ENCODE measurements at regions of chr2 and their contacts with region 1.

Region 1: GRCh38 chr2:198873503-198874471 is 584.0 kb downstream of the SATB2 start:
- DNase-seq: no peak
- ATAC-seq: peak; percentile 53
- H3K4me3 ChIP-seq: no peak overlapping the region
- H3K27ac ChIP-seq: no peak overlapping the region
- H3K4me1 ChIP-seq: no peaks in the 10 kb centered on the region
- H3K27me3 ChIP-seq: no peaks in the 10 kb centered on the region
- CTCF ChIP-seq: no peak
- EP300 ChIP-seq: no peak
- POLR2A ChIP-seq: no peak
- RAD21 ChIP-seq: no peak

Region 2: GRCh38 chr2:198890490-198890889 is 16.7 kb after region 1 on chr2:
- CTCF ChIA-PET with region 1: no interaction called
- POLR2A ChIA-PET with region 1: no interaction called
- RAD21 ChIA-PET with region 1: interaction called, 6 read pairs
- SMC1A ChIA-PET with region 1: interaction called, 18 read pairs
- in situ Hi-C with region 1: no loop called
- intact Hi-C with region 1: no loop called
- DNase-seq: no peak
- ATAC-seq: peak; percentile 95
- H3K4me3 ChIP-seq: no peak overlapping the region
- H3K27ac ChIP-seq: no peak overlapping the region
- H3K4me1 ChIP-seq: no peaks in the 10 kb centered on the region
- H3K27me3 ChIP-seq: no peaks in the 10 kb centered on the region
- CTCF ChIP-seq: no peak
- EP300 ChIP-seq: peak; percentile 70 to 72; a peak in 2 of 4 replicates
- POLR2A ChIP-seq: no peak
- RAD21 ChIP-seq: no peak

Region 3: DNA sequence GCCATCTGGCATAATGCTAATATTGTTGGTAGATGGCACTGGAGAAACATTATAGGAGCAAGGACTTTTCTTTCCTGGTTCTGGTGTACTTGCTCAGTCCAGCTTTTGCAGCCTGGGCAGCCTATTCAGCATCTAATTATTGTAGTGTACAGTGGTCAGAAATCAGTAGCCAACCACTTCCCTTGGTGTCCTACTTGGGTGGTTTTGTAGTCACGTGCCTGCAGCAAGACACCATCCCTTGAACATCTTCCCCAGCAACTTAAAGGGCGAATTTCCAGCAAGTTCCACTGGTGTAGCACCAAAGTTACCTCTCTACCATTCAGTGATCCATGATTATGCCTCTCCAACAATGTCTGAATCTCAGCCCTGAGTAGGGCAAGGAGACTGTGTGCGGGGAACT is 26.4 kb after region 1 on chr2:
- CTCF ChIA-PET with region 1: interaction called, 3 read pairs
- POLR2A ChIA-PET with region 1: no interaction called
- RAD21 ChIA-PET with region 1: interaction called, 5 read pairs
- SMC1A ChIA-PET with region 1: interaction called, 10 read pairs
- in situ Hi-C with region 1: no loop called
- intact Hi-C with region 1: no loop called
- DNase-seq: no peak
- ATAC-seq: peak; percentile 68
- H3K4me3 ChIP-seq: no peak overlapping the region
- H3K27ac ChIP-seq: no peak overlapping the region
- H3K4me1 ChIP-seq: no peaks in the 10 kb centered on the region
- H3K27me3 ChIP-seq: no peaks in the 10 kb centered on the region
- CTCF ChIP-seq: no peak
- EP300 ChIP-seq: no peak
- POLR2A ChIP-seq: no peak
- RAD21 ChIP-seq: no peak

Region 4: DNA sequence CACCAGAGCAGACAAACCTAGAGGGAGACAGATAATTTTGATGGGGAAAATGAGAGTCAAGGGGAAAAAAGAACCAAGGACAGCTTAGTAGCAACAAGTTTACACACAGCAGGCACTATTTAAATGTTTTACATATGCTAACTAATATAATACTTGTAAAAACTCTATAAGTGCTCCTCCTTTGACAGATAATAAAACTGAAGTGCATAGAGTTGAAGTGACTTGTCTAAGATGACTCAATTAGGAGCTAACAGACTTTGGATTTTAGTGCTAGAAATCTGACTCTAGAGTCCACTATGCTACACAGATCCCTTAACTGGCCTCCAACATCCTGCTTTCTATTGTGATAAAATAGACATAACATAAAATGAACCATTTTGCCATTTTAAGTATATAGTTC is 77.0 kb after region 1 on chr2:
- CTCF ChIA-PET with region 1: no interaction called
- POLR2A ChIA-PET with region 1: no interaction called
- RAD21 ChIA-PET with region 1: no interaction called
- SMC1A ChIA-PET with region 1: no interaction called
- in situ Hi-C with region 1: no loop called
- intact Hi-C with region 1: no loop called
- DNase-seq: no peak
- ATAC-seq: no peak
- H3K4me3 ChIP-seq: no peak overlapping the region
- H3K27ac ChIP-seq: no peak overlapping the region
- H3K4me1 ChIP-seq: no peaks in the 10 kb centered on the region
- H3K27me3 ChIP-seq: no peaks in the 10 kb centered on the region
- CTCF ChIP-seq: no peak
- EP300 ChIP-seq: no peak
- POLR2A ChIP-seq: no peak
- RAD21 ChIP-seq: no peak

Region 5: GRCh38 chr2:199136681-199137080 is 262.9 kb after region 1 on chr2:
- CTCF ChIA-PET with region 1: no interaction called
- POLR2A ChIA-PET with region 1: no interaction called
- RAD21 ChIA-PET with region 1: no interaction called
- SMC1A ChIA-PET with region 1: no interaction called
- in situ Hi-C with region 1: no loop called
- intact Hi-C with region 1: no loop called
- DNase-seq: no peak
- ATAC-seq: no peak
- H3K4me3 ChIP-seq: no peak overlapping the region
- H3K27ac ChIP-seq: no peak overlapping the region
- H3K4me1 ChIP-seq: no peaks in the 10 kb centered on the region
- H3K27me3 ChIP-seq: no peaks in the 10 kb centered on the region
- CTCF ChIP-seq: no peak
- EP300 ChIP-seq: no peak
- POLR2A ChIP-seq: no peak
- RAD21 ChIP-seq: no peak